Tibial artery (tissue), 4 donors: ENCODE measurements at regions of chr18 and their contacts with region 1.

Region 1: GRCh38 chr18:12947355-12948041 is at the start of gene SEH1L:
- DNase-seq: peak; percentile 99 to 100
- H3K4me3 ChIP-seq: peak within 1 kb of the TSS; percentile 68 to 84
- H3K27ac ChIP-seq: peak within 1 kb of the TSS; percentile 88 to 98
- H3K4me1 ChIP-seq: peaks cover 0 to 52% (median 10%) of the 10 kb centered on the region in 4 donors
- H3K27me3 ChIP-seq: no peaks in the 10 kb centered on the region
- CTCF ChIP-seq: no peak

Region 2: DNA sequence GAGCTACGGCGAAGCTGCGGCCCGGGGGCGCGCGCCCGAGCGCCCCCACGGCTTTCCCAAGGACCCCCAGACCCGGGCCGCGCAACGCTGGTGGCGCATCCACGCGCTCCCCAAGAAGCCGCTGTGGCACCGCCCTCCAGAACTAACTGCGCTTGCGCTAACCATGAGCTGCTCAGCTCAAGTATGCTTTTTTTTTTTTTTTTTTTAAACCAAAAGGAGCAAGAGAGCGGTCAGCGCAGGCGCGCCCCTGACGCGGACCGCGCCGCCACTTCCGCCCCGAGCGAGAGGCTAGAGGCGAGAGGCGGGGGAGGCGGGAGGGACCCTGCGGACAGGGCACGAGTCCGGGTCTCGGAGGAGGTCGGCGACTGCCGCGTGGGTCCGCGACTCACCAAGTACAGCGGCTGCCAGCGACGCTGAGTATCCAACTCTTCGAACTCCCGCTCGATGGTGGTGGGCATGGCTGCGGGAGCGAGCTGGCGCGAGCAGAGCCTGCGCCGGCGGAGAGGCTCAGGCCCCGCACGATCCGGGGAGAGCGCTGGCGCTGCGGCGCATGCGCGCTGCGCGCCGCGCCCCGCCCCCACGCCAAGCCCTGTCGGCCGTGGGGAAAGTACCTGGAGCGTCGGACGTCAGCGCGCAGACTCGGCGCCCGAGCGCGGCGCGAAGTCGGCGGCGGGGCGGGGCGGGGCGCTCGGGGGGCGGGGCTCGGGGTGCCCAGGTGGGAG is 63.7 kb before region 1 on chr18 and contains the start of gene PTPN2:
- intact Hi-C with region 1: loop called (anchors 5 kb)
- DNase-seq: peak; percentile 94 to 97
- H3K4me3 ChIP-seq: peak within 1 kb of the TSS; percentile 78 to 82
- H3K27ac ChIP-seq: peak within 1 kb of the TSS; percentile 93 to 96
- H3K4me1 ChIP-seq: peaks cover 0 to 16% (median 9%) of the 10 kb centered on the region in 4 donors
- H3K27me3 ChIP-seq: no peaks in the 10 kb centered on the region
- CTCF ChIP-seq: no peak

Region 3: DNA sequence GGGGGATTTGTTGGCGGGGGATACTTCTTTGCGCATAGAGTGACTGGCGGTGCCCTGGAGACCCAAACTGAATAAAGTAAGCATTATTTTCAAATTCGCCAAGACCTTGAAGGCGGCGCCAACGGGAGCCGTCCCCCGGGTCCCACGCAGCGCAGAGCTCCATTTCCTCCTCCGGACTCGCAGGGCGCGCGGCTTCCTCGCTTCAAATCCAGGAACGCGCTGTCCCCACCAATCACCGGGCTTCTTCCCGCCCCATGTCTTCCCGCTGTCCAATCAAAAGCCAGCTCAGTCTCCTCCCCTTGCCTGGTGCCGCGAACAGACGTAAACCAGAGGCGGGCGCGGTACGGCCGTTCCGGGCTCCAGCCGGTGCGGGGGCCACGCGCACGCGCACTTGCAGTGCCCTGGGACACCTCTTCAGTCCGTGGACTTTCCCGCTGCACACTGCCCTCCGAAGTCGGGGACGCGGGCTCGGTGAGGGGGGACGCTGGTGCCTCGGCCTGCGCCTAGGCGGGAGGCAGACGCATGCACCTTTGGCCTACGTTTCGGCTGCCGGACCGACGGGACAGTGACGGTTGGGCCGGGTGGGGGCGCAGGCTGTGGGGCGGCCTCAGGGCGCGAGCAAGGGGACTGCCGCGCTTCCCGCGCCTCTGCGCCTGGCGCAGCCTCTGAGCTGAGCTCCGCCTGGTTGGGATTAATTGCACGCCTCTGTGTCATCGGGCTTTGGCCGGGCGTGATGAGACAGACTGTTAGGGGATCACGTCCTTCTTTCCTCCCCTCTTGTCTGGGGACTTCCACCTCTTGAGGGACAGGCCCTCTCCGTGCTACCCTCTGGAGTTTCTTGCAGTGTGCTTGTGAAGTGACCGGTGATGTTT is 43.7 kb after region 1 on chr18 and contains the start of gene CEP192:
- intact Hi-C with region 1: loop called (anchors 2 kb)
- DNase-seq: peak; percentile 97 to 98
- H3K4me3 ChIP-seq: peak within 1 kb of the TSS; percentile 81 to 90
- H3K27ac ChIP-seq: peak within 1 kb of the TSS; percentile 79 to 82
- H3K4me1 ChIP-seq: peaks cover 0 to 24% (median 17%) of the 10 kb centered on the region in 4 donors
- H3K27me3 ChIP-seq: no peaks in the 10 kb centered on the region
- CTCF ChIP-seq: no peak